H1 (cell line): ENCODE measurements at regions of chr11 and their contacts with region 1.

Region 1: DNA sequence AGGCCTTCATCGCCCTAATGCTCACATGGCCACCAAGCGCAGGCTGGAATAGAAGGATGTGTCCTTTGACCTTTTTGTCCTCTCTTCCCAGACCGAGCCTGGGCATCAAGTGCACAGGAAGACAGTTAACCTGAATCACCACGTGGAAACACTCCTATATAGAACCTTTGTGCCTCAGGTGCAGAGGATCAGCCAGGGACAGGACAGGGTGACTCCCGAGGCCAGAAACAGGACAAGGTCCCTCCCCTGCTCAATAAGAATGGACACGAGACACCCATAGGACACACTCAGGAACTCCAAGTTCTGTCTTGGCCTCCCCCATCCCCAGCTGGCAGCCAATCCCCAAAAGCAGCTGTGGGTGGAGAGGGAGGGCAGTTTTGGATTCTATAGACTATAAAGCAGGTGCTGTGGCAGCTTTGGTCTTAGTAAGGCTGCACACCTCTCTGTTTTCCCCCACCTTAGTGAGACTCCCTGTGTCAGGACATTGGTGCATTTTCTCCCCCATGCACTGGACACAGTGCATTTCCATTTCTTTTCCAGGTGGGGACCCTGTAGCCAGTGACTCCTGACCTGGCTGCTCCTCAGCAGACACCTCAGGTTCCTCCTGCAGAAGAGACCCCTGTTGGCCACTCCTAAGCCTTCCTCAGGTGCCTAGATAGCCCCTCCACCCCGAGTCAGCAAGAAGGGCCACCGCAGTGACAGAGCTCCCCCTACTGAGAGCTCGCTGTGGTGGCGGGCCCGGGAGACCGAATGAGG is 43.6 kb upstream of the POU2AF1 start:
- DNase-seq: peak; percentile 56 to 87
- H3K4me3 ChIP-seq: no peak overlapping the region
- H3K27ac ChIP-seq: no peak overlapping the region
- H3K4me1 ChIP-seq: no peaks in the 10 kb centered on the region
- H3K27me3 ChIP-seq: no peaks in the 10 kb centered on the region
- CTCF ChIP-seq: peak; percentile 92 to 99 (median 98)
- EP300 ChIP-seq: no peak
- POLR2A ChIP-seq: no peak
- RAD21 ChIP-seq: peak; percentile 99

Region 2: DNA sequence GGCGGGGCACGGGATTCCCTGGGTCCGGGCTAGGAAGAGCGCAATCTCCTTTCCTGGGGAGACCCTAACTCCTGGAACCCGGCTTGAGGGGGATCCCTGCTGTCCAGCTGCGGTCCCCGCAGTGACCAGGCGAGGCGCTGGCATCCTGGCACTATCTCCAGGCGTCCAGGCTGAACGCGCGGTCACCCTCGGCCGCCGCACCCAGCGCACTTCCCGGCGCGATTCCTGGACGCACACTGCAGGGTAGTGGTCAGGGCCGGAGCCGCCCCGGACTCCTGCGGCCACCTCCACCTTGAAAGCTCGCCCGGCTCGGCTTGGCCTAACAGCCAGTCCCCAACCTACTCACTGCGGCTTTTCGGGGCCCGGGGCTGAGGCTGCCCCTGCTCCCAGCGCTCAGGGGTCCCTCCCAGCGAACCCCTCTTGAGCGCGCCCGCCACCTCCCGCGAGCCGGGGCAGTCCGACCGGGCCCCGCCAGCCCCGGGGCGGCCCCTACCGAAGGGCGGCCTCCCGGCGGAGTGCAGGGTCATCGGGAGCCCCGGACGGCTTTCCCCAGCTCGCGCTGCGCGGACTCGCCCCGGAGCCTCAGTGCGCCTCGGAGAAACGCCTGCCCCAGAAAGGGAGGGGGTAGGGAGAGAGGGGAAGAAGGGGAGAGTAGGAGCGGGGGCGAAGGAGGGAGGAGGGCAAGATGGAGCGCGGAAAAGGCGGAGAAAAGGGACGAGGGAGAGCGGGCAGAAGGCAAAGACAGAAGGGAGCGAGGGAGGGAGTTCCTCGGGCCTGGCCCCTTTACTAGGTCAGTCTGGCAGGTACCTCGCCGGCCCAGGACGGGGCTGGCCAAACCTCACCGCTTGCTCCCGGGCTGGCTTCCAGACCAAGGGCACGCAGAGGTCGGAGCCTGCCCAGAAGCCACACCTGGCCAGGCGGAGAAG is 123.3 kb before region 1 on chr11:
- CTCF ChIA-PET with region 1: interaction called, 34 read pairs
- POLR2A ChIA-PET with region 1: no interaction called
- DNase-seq: peak in 1 of 2 experiments; percentile 83
- H3K4me3 ChIP-seq: peak overlapping the region; percentile 69 to 95 (median 76)
- H3K27ac ChIP-seq: no peak overlapping the region
- H3K4me1 ChIP-seq: peaks cover 1 to 9% (median 6%) of the 10 kb centered on the region in 4 experiments; a peak in 6 of 7 replicates
- H3K27me3 ChIP-seq: peaks cover 0 to 33% (median 16%) of the 10 kb centered on the region in 4 experiments; a peak in 5 of 7 replicates
- CTCF ChIP-seq: peak; percentile 49 to 69 (median 64)
- EP300 ChIP-seq: no peak
- POLR2A ChIP-seq: peak in 1 of 2 experiments; percentile 52; a peak in 1 of 3 replicates
- RAD21 ChIP-seq: peak in 1 of 2 experiments; percentile 34; a peak in 1 of 4 replicates

Region 3: GRCh38 chr11:111408789-111409727 is 13.6 kb before region 1 on chr11:
- CTCF ChIA-PET with region 1: interaction called, 137 read pairs
- POLR2A ChIA-PET with region 1: no interaction called
- DNase-seq: no peak
- H3K4me3 ChIP-seq: no peak overlapping the region
- H3K27ac ChIP-seq: no peak overlapping the region
- H3K4me1 ChIP-seq: no peaks in the 10 kb centered on the region
- H3K27me3 ChIP-seq: no peaks in the 10 kb centered on the region; a peak in 1 of 7 replicates
- CTCF ChIP-seq: no peak
- EP300 ChIP-seq: no peak
- POLR2A ChIP-seq: no peak
- RAD21 ChIP-seq: no peak

Region 4: GRCh38 chr11:111441443-111441842 is 18.8 kb after region 1 on chr11:
- CTCF ChIA-PET with region 1: interaction called, 104 read pairs
- POLR2A ChIA-PET with region 1: no interaction called
- DNase-seq: no peak
- H3K4me3 ChIP-seq: no peak overlapping the region
- H3K27ac ChIP-seq: no peak overlapping the region
- H3K4me1 ChIP-seq: peaks cover 0 to 8% (median 5%) of the 10 kb centered on the region in 4 experiments; a peak in 4 of 7 replicates
- H3K27me3 ChIP-seq: 0 out of 7 replicates have a peak, but pooled peaks cover 0 to 2% (median 1%) of the 10 kb centered on the region in 4 experiments
- CTCF ChIP-seq: no peak
- EP300 ChIP-seq: no peak
- POLR2A ChIP-seq: no peak
- RAD21 ChIP-seq: no peak

Region 5: DNA sequence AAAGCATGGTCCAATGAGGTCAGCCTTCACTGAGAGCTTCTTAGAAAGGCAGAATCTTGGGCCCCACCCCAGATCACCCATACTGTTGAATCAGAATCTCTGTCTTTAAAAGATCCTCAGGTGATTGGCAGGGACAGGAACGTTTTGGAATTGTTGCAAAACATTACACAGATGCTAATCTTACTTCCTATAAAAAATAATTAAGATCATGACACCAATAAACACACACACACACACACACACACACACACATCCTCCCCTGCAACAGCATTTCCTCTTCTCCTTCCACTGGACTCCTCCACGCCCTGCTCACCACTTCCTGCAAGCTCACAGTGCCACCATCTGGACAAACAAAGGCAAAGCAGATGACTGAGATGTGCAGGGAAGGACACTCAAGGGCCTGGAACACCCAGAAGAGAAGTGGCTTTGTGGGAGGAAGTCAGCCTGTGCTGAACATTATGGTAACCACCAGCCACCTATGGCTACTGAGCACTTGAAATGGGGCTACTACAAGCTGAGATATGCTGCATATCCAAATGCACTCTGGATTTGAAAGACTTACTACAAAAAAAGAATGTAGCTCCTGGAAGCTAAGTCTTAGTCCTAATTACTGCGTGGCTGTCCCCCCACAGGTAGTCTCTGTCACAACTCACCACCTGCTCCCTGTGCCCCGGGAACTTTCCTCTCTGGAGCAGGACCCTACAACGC is 23.9 kb after region 1 on chr11:
- CTCF ChIA-PET with region 1: interaction called, 104 read pairs
- POLR2A ChIA-PET with region 1: no interaction called
- DNase-seq: peak in 1 of 2 experiments; percentile 63
- H3K4me3 ChIP-seq: no peak overlapping the region
- H3K27ac ChIP-seq: no peak overlapping the region
- H3K4me1 ChIP-seq: peaks cover 0 to 6% (median 2%) of the 10 kb centered on the region in 4 experiments; a peak in 4 of 7 replicates
- H3K27me3 ChIP-seq: no peaks in the 10 kb centered on the region
- CTCF ChIP-seq: peak; percentile 88 to 95 (median 88)
- EP300 ChIP-seq: no peak
- POLR2A ChIP-seq: no peak
- RAD21 ChIP-seq: peak; percentile 95 to 98

Region 6: DNA sequence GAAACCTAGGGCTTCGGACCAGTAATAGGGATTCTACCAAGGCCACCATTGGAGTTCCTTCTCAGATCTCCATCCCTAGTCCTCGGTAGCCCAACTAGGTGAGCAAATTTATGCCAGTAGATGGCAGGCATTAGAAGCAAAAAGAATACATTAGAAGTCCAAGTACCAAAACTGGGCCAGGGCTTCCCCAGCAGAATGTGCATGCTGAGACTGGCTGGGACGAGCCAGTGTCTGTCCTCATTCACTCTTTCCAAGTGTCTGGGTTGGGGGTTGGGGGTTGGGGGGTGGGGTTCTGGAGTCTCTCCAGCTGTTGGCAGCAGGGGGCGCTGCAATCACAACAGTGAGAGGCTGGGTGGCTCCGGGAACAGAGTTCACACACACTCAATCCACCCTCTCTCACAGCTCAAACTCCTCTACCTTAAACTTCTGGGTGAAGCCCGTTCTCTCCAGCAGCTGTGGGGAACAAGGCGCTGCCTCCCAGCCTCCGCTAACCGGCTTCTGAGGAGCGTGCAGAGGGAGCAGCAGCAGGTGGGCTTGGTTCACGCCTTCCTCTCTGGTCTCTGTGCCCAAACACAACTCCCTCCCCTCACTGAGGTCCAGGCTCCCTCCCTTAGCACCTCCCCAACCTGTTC is 32.0 kb after region 1 on chr11:
- CTCF ChIA-PET with region 1: interaction called, 14 read pairs
- POLR2A ChIA-PET with region 1: no interaction called
- DNase-seq: peak in 1 of 2 experiments; percentile 88
- H3K4me3 ChIP-seq: peak overlapping the region; percentile 6 to 56 (median 22); a peak in 6 of 8 replicates
- H3K27ac ChIP-seq: no peak overlapping the region
- H3K4me1 ChIP-seq: peaks cover 0 to 7% (median 4%) of the 10 kb centered on the region in 4 experiments; a peak in 3 of 7 replicates
- H3K27me3 ChIP-seq: no peaks in the 10 kb centered on the region
- CTCF ChIP-seq: peak; percentile 48 to 62 (median 56)
- EP300 ChIP-seq: no peak
- POLR2A ChIP-seq: no peak
- RAD21 ChIP-seq: peak; percentile 61 to 67

Region 7: GRCh38 chr11:111585371-111585770 is 162.7 kb after region 1 on chr11:
- CTCF ChIA-PET with region 1: no interaction called
- POLR2A ChIA-PET with region 1: no interaction called
- DNase-seq: no peak
- H3K4me3 ChIP-seq: no peak overlapping the region
- H3K27ac ChIP-seq: no peak overlapping the region
- H3K4me1 ChIP-seq: peaks cover 0 to 5% (median 0%) of the 10 kb centered on the region in 4 experiments; a peak in 1 of 7 replicates
- H3K27me3 ChIP-seq: no peaks in the 10 kb centered on the region
- CTCF ChIP-seq: no peak
- EP300 ChIP-seq: no peak
- POLR2A ChIP-seq: no peak
- RAD21 ChIP-seq: no peak